CD14-positive monocyte (primary cell): ENCODE measurements at regions of chr6 and their contacts with region 1.

Region 1: GRCh38 chr6:163667372-163668060 is 253.0 kb downstream of the QKI start:
- DNase-seq: peak; percentile 91 to 97 (median 93)
- H3K4me3 ChIP-seq: peak overlapping the region in 1 of 3 experiments; percentile 56
- H3K4me3 Mint-ChIP-seq: peak overlapping the region; percentile 48 to 70
- H3K27ac ChIP-seq: peak overlapping the region; percentile 86 to 94
- H3K27ac Mint-ChIP-seq: peak overlapping the region; percentile 93 to 99 (median 98)
- H3K4me1 ChIP-seq: peaks cover 48 to 57% of the 10 kb centered on the region in 2 donors
- H3K4me1 Mint-ChIP-seq: peaks cover 4% of the 10 kb centered on the region
- H3K27me3 ChIP-seq: no peaks in the 10 kb centered on the region
- H3K27me3 Mint-ChIP-seq: peaks cover 5 to 11% (median 6%) of the 10 kb centered on the region in 3 donors
- CTCF ChIP-seq: no peak

Region 2: DNA sequence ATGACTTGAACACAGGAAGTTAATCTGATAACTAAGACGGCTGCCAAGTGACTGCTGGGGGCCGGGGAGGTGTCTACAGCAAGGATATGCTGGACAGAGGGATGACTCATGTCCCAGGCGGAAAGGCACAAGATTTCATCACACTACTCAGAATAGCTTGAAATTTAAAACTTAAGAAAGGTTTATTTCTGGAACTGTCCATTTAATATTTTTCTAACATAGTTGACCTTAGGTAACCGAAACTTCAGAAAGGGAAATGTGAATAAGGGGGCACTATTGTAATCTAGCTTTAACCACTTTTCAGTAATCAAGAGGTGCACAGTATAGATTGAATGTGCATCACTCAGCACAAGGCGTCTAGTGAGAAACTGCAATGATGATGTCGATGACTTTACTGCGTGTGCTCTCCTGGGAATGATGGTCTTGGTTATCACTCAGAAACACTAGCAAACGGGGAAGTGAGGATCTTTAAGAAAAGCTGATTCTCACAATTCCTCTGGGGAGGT is 81.5 kb before region 1 on chr6:
- intact Hi-C with region 1: loop called in 1 of 2 experiments (anchors 10 kb)
- DNase-seq: peak; percentile 73 to 90 (median 82)
- H3K4me3 ChIP-seq: no peak overlapping the region
- H3K4me3 Mint-ChIP-seq: peak overlapping the region in 1 of 2 donors; percentile 57
- H3K27ac ChIP-seq: peak overlapping the region in 1 of 2 donors; percentile 58
- H3K27ac Mint-ChIP-seq: peak overlapping the region; percentile 4 to 79 (median 46)
- H3K4me1 ChIP-seq: peaks cover 26 to 35% of the 10 kb centered on the region in 2 donors
- H3K4me1 Mint-ChIP-seq: peaks cover 28% of the 10 kb centered on the region
- H3K27me3 ChIP-seq: peaks cover 0 to 4% of the 10 kb centered on the region in 2 donors
- H3K27me3 Mint-ChIP-seq: peaks cover 10 to 15% (median 11%) of the 10 kb centered on the region in 3 donors
- CTCF ChIP-seq: no peak

Region 3: DNA sequence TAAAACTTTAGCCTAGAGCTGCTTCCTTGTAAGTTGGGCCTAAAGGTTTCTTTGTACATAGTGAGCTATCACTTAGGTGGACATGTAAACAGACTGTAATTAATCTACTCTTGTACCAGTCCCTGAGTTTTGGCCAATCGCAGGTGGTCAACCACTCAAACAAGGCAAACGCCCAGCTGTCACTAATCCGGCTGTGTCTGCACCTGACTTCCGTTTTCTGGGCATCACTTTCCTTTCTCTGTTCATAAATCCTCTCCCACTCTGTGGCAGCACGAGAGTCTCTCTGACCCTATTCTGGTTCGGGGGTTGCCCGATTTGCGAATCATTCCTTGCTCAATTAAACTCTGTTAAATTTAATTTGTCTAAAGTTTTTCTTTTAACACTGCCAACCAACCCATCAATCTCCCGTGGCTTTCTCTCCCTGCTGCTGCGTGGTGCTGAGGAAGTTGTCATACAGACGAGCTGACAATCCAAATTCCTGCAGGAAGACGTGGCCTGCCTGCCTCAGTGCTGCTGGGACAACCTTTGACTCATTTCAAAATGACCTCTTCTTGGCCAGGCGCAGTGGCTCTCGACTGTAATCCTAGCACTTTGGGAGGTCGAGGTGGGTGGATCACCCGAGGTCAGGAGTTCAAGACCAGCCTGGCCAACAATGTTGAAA is 46.7 kb before region 1 on chr6:
- intact Hi-C with region 1: no loop called
- DNase-seq: no peak
- H3K4me3 ChIP-seq: no peak overlapping the region
- H3K4me3 Mint-ChIP-seq: peak overlapping the region in 1 of 2 donors; percentile 32
- H3K27ac ChIP-seq: no peak overlapping the region
- H3K27ac Mint-ChIP-seq: peak overlapping the region in 1 of 7 donors; percentile 68
- H3K4me1 ChIP-seq: no peaks in the 10 kb centered on the region
- H3K4me1 Mint-ChIP-seq: peaks cover 4% of the 10 kb centered on the region
- H3K27me3 ChIP-seq: no peaks in the 10 kb centered on the region
- H3K27me3 Mint-ChIP-seq: peaks cover 4 to 17% (median 15%) of the 10 kb centered on the region in 3 donors
- CTCF ChIP-seq: no peak

Region 4: DNA sequence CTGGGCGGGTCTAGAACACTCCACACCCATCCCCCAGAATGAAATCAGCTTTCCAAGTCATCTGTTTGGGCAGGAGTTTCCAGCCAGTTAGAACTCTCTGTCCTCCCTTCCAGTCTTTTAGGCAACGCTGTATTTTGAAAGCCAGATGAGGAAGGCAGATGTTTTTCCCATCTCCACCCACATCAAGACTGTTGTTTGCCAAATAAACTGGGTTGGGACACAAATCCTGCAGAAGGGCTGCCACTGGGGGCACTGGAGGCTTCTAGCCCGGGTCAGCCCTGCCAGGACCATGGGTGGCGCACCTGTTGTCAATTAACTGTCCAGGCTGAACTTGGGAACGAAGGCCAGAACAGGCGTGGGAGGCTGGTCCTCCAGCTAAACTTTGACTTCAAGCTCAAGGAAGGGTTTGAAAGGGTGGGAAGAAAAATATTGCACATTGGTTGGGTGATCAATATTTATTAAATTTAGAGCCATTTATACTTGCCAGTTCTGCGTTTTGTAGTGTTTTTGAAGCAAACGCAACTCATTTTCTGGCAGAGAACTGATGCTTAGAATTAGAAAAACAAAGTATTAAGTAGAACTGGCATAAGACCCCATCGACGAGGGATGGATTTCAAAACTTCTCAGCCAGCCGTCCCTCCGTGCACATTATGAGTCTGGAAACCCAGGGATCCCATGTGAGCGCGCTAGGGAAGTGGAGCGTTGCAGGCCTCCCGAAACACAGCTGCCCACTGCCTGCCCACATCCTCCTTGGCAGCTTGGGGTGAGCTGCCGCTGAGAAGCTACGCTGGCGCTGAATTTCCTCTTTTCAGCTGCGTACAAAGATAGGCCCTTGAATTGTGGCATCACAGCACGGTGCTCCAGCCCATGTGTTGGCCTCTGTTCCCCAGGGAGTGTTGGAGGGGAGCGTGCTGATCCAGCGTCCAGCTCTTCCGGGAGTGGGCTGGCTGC is 44.4 kb after region 1 on chr6:
- intact Hi-C with region 1: loop called (anchors 5 kb)
- DNase-seq: peak; percentile 82 to 88 (median 85)
- H3K4me3 ChIP-seq: peak overlapping the region in 1 of 3 experiments; percentile 52
- H3K4me3 Mint-ChIP-seq: peak overlapping the region in 1 of 2 donors; percentile 73
- H3K27ac ChIP-seq: peak overlapping the region; percentile 72 to 85
- H3K27ac Mint-ChIP-seq: peak overlapping the region; percentile 82 to 95 (median 93)
- H3K4me1 ChIP-seq: peaks cover 78 to 81% of the 10 kb centered on the region in 2 donors
- H3K4me1 Mint-ChIP-seq: peaks cover 70% of the 10 kb centered on the region
- H3K27me3 ChIP-seq: no peaks in the 10 kb centered on the region
- H3K27me3 Mint-ChIP-seq: peaks cover 0 to 11% (median 2%) of the 10 kb centered on the region in 3 donors
- CTCF ChIP-seq: no peak

Region 5: DNA sequence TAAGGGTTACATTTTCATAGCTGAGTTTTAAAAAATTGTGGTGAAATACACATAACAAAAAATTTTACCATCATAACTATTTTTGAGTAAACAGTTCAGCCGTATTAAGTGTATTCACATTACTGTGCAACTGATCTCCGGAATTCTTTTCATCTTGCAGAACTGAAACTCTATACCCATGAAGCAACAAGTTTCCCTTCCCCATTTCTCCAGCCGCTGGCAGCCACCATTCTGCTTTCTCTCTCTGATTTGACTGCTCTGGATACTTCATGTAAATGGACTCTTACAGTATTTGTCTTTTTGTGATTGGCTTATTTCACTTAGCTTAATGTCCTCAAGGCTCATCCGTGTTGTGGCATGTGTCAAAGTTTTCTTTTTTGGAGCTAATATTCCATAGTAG is 88.6 kb after region 1 on chr6:
- intact Hi-C with region 1: loop called in 1 of 2 experiments (anchors 5 kb)
- DNase-seq: peak; percentile 84 to 93 (median 87)
- H3K4me3 ChIP-seq: peak overlapping the region in 1 of 3 experiments; percentile 54
- H3K4me3 Mint-ChIP-seq: peak overlapping the region in 1 of 2 donors; percentile 74
- H3K27ac ChIP-seq: peak overlapping the region; percentile 74 to 81
- H3K27ac Mint-ChIP-seq: peak overlapping the region; percentile 87 to 97 (median 95)
- H3K4me1 ChIP-seq: peaks cover 43 to 52% of the 10 kb centered on the region in 2 donors
- H3K4me1 Mint-ChIP-seq: peaks cover 53% of the 10 kb centered on the region
- H3K27me3 ChIP-seq: no peaks in the 10 kb centered on the region
- H3K27me3 Mint-ChIP-seq: peaks cover 12 to 14% (median 13%) of the 10 kb centered on the region in 3 donors
- CTCF ChIP-seq: no peak